ENCODE measurements at regions of chr20 and their contacts with region 1.

Region 1: GRCh38 chr20:4076671-4077070 is 61.3 kb upstream of the RNF24 start:
- ATAC-seq: peak in 3 of 8 experiments; percentile 42 to 92 (median 91)
- H3K4me3 ChIP-seq: no peak overlapping the region
- H3K27ac ChIP-seq: no peak overlapping the region
- H3K4me1 ChIP-seq: no peaks in the 10 kb centered on the region

Region 2: GRCh38 chr20:4014031-4014474 is 62.6 kb before region 1 on chr20:
- in situ Hi-C with region 1: loop called in 1 of 9 experiments (anchors 10 kb)
- ATAC-seq: peak; percentile 15 to 47 (median 25)
- H3K4me3 ChIP-seq: peak overlapping the region; percentile 88 to 97 (median 93)
- H3K27ac ChIP-seq: peak overlapping the region; percentile 92 to 95
- H3K4me1 ChIP-seq: peaks cover 5 to 12% of the 10 kb centered on the region in 2 donors

Region 3: GRCh38 chr20:4026093-4026601 is 50.5 kb before region 1 on chr20:
- in situ Hi-C with region 1: loop called in 1 of 9 experiments (anchors 10 kb)
- ATAC-seq: peak in 4 of 8 experiments; percentile 15 to 96 (median 68)
- H3K4me3 ChIP-seq: no peak overlapping the region
- H3K27ac ChIP-seq: no peak overlapping the region
- H3K4me1 ChIP-seq: no peaks in the 10 kb centered on the region